ENCODE measurements at regions of chr17 and their contacts with region 1.

Region 1: DNA sequence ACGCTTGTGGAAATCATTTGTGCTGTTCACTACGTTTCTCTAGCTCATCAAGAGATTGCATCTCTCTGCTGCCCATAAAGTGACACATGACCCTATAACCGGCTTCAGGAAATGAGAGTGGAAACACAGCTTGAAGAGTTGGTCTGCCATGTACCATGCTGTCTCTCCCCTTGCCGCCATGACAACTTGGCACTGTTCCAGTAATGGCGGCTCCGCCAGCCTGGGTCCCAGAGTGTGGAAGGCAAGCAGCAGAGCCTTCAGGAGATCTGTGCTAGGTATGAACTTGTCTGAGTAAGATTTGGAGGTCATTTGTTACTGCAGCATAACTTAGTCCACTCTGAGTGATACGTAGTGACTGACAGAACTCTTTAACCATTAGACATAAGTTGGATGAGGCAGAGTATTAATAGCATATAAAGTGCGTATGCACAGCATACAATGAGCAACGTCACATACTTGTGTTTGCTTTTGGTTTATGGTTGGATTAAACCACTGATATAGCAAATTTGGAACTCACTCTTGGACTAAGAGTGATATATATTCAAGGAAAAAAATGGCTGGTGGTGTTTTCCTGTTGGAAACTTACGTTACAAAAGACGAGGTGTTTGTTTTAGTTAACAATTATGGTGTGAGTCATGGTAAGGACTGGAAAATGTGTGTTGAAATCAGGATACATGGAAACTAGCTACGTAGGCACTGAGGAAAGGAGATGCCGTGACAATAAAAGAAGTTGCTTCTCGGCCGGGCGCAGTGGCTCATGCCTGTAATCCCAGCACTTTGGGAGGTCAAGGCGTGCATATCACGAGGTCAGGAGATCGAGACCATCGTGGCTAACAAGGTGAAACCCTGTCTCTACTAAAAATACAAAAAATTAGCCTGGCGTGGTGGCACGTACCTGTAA is 24.4 kb upstream of the PMP22 start:
- DNase-seq: no peak
- H3K4me3 ChIP-seq: no peak overlapping the region
- H3K27ac ChIP-seq: no peak overlapping the region
- H3K4me1 ChIP-seq: no peaks in the 10 kb centered on the region
- H3K27me3 ChIP-seq: peaks cover 5% of the 10 kb centered on the region
- CTCF ChIP-seq: no peak

Region 2: GRCh38 chr17:15364615-15365014 is 75.1 kb after region 1 on chr17:
- CTCF ChIA-PET with region 1: no interaction called
- dilution Hi-C with region 1: loop called (anchors 5 kb)
- in situ Hi-C with region 1: no loop called
- intact Hi-C with region 1: no loop called
- DNase-seq: no peak
- H3K4me3 ChIP-seq: no peak overlapping the region
- H3K27ac ChIP-seq: no peak overlapping the region
- H3K4me1 ChIP-seq: no peaks in the 10 kb centered on the region
- H3K27me3 ChIP-seq: no peaks in the 10 kb centered on the region
- CTCF ChIP-seq: no peak

Measured in mammary epithelial cell (primary cell).